Gastrocnemius medialis (tissue), 4 donors: ENCODE measurements at regions of chr16 and their contacts with region 1.

Region 1: DNA sequence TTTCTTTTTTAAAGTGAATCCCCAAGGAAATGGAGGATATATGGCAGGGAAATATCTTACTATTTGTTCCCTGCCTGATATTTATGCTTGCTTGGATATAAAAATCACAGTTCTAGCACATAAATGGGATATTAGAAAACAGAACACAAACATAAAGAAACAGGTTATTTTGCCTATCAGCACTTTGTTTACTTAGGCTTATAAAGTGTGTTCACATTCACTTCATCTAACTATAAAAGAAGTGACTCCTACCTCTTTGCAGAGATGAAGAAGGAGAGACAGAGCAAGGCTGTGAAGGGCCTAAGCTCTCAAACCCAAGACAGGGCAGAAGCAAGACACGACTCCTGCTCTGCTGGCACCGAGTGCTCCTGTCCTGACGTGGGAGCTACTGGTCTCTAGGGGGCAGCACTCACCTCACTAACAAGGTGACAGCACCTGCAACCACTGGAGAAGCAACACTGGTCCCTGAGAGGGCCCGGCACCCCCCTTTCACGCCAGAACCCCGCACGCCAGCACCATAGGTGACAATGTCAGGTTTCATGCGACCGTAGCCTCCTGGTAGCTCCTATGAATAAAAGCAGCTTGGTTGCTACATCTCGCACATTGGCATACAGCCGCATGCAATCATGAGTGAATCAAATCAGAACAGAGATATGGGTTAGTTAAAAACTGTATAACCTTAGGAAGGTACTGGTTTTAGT is 32.0 kb downstream of the MBTPS1 start:
- DNase-seq: peak in 1 of 2 donors; percentile 69
- ATAC-seq: peak; percentile 41 to 66
- H3K4me3 ChIP-seq: no peak overlapping the region
- H3K27ac ChIP-seq: no peak overlapping the region
- H3K4me1 ChIP-seq: peaks cover 0 to 12% of the 10 kb centered on the region in 2 donors
- H3K27me3 ChIP-seq: no peaks in the 10 kb centered on the region
- CTCF ChIP-seq: peak; percentile 51 to 75 (median 57)
- POLR2A ChIP-seq: no peak

Region 2: DNA sequence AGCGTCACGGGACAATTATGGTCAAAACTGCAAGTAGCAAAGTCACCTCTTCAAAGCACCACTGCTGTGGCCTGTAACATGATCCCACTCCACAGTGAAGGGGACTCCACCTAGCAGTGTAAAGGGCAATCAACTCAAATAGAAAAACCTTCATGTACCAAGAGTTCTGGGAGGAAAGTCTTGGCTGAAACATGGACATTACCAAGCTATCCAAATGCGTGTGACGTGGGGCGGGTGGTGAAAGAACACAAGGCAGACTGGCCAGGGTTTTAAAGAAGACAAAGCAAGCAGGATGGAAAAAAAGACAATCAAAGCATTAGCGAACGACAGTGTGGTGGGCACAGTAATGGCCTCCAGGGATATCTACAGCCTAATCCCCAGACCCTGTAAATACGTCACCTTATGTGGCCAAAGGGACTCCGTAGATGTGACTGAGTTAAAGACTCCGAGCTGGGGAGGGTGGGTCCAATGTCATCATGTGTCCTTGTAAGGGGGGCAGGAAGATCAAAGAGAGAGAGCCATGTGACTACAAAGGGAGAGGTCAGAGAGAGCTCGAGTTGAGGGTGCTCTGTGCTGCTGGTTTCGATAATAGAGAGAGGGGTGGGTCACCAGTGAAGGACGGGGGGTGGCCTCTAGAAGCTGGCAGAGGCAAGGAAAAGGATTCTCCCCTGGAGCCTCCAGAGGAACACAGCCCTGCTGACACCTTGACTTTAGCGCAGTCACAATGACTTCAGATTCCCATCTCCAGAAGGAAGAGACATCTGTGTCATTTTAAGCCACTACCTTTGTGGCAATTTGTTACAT is 54.3 kb after region 1 on chr16:
- in situ Hi-C with region 1: no loop called
- intact Hi-C with region 1: loop called (anchors 5 kb)
- DNase-seq: peak; percentile 32 to 77
- ATAC-seq: peak; percentile 91 to 93
- H3K4me3 ChIP-seq: peak overlapping the region; percentile 23 to 45 (median 42)
- H3K27ac ChIP-seq: peak overlapping the region; percentile 86 to 92 (median 87)
- H3K4me1 ChIP-seq: peaks cover 12 to 30% of the 10 kb centered on the region in 2 donors
- H3K27me3 ChIP-seq: no peaks in the 10 kb centered on the region
- CTCF ChIP-seq: no peak
- POLR2A ChIP-seq: peak in 1 of 2 donors; percentile 28

Region 3: DNA sequence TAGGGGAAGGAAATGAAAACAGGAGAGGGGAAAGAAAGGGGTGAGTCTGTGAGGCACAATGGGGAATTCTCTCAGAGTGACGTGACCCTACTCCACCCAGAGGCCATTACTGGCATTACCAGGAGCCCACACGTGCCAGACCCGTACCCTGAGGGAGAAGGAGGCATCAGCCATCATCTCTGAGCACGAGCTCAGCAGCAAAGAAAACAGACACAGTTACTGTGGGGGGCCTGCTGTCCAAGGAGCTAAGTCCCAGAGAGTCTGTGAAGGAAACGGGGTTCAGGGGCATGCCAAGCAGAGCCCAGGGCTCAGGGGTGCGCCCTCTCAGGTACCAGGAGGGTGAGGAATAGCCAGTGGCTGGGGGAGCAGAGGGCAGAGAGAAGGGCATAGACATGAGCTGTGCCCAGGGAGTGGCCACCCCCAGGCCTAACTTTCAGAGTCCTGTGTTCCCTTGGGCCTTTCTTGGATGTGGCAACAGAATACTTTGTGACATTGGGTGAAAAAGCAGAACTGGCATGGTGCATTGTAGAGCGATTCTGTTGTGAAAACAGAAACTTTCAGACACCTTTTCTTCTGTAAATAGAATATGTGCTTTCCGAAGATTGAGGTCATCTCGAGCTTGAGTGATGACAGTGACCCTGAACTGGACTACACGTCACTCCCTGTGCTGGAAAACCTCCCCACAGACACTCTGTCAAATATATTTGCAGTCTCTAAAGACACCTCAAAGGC is 90.8 kb after region 1 on chr16:
- in situ Hi-C with region 1: loop called (anchors 10 to 25 kb)
- intact Hi-C with region 1: no loop called
- DNase-seq: peak in 1 of 2 donors; percentile 45
- ATAC-seq: peak; percentile 77 to 80
- H3K4me3 ChIP-seq: no peak overlapping the region
- H3K27ac ChIP-seq: peak overlapping the region in 3 of 4 donors; percentile 63 to 81 (median 78)
- H3K4me1 ChIP-seq: peaks cover 0 to 5% of the 10 kb centered on the region in 2 donors
- H3K27me3 ChIP-seq: no peaks in the 10 kb centered on the region
- CTCF ChIP-seq: peak; percentile 52 to 82 (median 75)
- POLR2A ChIP-seq: no peak

Region 4: DNA sequence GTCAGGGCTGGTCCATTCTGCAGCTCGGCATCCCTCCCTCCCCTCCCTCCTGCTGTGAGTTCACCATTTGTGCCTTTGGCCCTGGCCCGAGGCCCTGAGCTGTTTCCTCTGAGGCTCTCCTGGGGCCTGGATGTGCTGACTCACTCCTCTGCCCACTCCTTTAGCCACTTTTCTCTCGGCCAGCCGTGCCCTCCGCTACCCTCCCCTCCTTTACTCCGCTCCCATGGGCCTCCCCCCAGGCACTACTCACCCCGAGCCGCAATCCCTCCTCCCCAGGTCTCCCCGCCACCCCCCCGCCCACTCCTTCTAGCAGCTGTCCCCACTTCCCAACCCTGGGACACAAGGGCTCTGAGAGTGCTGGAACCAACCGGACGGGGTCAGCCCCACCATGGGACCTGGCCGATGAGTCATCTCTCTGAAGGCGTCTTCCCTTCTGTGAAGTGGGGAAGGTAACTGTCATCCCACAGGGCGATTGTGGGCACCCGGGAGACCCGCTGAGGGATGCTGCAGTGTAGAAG is 143.7 kb after region 1 on chr16:
- in situ Hi-C with region 1: no loop called
- intact Hi-C with region 1: no loop called
- DNase-seq: peak; percentile 15 to 61
- ATAC-seq: peak; percentile 62 to 66
- H3K4me3 ChIP-seq: peak overlapping the region in 2 of 4 donors; percentile 8 to 25
- H3K27ac ChIP-seq: peak overlapping the region in 3 of 4 donors; percentile 38 to 69 (median 44)
- H3K4me1 ChIP-seq: peaks cover 7 to 12% of the 10 kb centered on the region in 2 donors
- H3K27me3 ChIP-seq: no peaks in the 10 kb centered on the region
- CTCF ChIP-seq: no peak
- POLR2A ChIP-seq: no peak